CD4-positive, alpha-beta memory T cell (primary cell): ENCODE measurements at regions of chr6 and their contacts with region 1.

Region 1: GRCh38 chr6:130189531-130190397 is 33.0 kb downstream of the SAMD3 start:
- DNase-seq: no peak
- H3K4me3 ChIP-seq: no peak overlapping the region
- H3K4me3 Mint-ChIP-seq: peak overlapping the region in 3 of 8 donors; percentile 14 to 37 (median 16)
- H3K27ac ChIP-seq: no peak overlapping the region
- H3K27ac Mint-ChIP-seq: peak overlapping the region; percentile 41 to 88 (median 62)
- H3K4me1 ChIP-seq: peaks cover 38% of the 10 kb centered on the region
- H3K4me1 Mint-ChIP-seq: peaks cover 52 to 84% (median 67%) of the 10 kb centered on the region in 4 donors
- H3K27me3 ChIP-seq: no peaks in the 10 kb centered on the region
- H3K27me3 Mint-ChIP-seq: no peaks in the 10 kb centered on the region

Region 2: DNA sequence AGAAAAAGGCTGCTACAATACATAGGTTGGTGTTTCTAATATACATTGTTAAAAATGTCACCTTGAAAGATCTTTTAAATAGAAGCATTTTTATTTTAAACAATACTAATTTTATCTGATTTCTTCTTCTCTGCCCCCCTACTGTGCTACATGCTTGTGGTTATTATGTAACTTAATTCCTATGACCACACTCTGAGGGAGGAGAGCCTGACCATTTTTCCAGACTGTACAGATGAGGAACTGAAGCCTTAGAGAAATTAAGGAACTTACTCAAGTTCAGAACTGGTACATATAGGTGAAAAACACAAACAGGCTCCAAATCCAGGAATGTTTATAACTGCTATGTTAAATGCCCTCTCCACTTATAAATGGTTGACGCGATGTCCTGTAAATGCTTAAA is 436.3 kb before region 1 on chr6:
- CTCF ChIA-PET with region 1: no interaction called
- POLR2A ChIA-PET with region 1: no interaction called
- intact Hi-C with region 1: no loop called
- DNase-seq: no peak
- H3K4me3 ChIP-seq: no peak overlapping the region
- H3K4me3 Mint-ChIP-seq: no peak overlapping the region
- H3K27ac ChIP-seq: no peak overlapping the region
- H3K27ac Mint-ChIP-seq: no peak overlapping the region
- H3K4me1 ChIP-seq: peaks cover 37% of the 10 kb centered on the region
- H3K4me1 Mint-ChIP-seq: peaks cover 30 to 36% (median 34%) of the 10 kb centered on the region in 4 donors
- H3K27me3 ChIP-seq: no peaks in the 10 kb centered on the region
- H3K27me3 Mint-ChIP-seq: no peaks in the 10 kb centered on the region

Region 3: GRCh38 chr6:129936329-129937165 is 253.2 kb before region 1 on chr6:
- CTCF ChIA-PET with region 1: no interaction called
- POLR2A ChIA-PET with region 1: no interaction called
- intact Hi-C with region 1: no loop called
- DNase-seq: peak in 4 of 5 donors; percentile 25 to 39 (median 34)
- H3K4me3 ChIP-seq: no peak overlapping the region
- H3K4me3 Mint-ChIP-seq: peak overlapping the region in 2 of 8 donors; percentile 38 to 79
- H3K27ac ChIP-seq: no peak overlapping the region
- H3K27ac Mint-ChIP-seq: no peak overlapping the region
- H3K4me1 ChIP-seq: no peaks in the 10 kb centered on the region
- H3K4me1 Mint-ChIP-seq: peaks cover 0 to 4% (median 1%) of the 10 kb centered on the region in 4 donors
- H3K27me3 ChIP-seq: peaks cover 4% of the 10 kb centered on the region
- H3K27me3 Mint-ChIP-seq: peaks cover 11 to 15% of the 10 kb centered on the region in 2 donors

Region 4: DNA sequence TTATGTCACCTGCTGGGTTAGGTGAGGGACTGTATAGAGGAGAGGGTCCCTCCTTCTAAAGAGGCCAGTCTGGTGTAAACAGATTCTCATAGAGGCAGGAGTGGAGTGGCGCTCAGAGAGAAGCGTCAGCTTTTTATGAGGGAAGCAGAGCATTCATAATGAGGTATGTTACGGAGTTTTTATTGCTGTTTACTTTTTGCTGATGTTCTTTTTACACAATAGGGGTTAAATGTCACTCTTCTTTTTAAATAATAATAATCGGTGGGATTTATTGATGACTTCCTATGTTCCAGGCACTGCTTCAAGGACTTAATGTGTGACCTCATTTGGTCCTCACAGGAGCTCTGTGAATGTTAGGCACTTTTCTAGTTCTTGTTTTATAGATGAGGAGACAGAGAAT is 91.4 kb before region 1 on chr6:
- CTCF ChIA-PET with region 1: no interaction called
- POLR2A ChIA-PET with region 1: no interaction called
- intact Hi-C with region 1: no loop called
- DNase-seq: no peak
- H3K4me3 ChIP-seq: no peak overlapping the region
- H3K4me3 Mint-ChIP-seq: no peak overlapping the region
- H3K27ac ChIP-seq: no peak overlapping the region
- H3K27ac Mint-ChIP-seq: no peak overlapping the region
- H3K4me1 ChIP-seq: peaks cover 3% of the 10 kb centered on the region
- H3K4me1 Mint-ChIP-seq: peaks cover 0 to 25% (median 4%) of the 10 kb centered on the region in 4 donors
- H3K27me3 ChIP-seq: no peaks in the 10 kb centered on the region
- H3K27me3 Mint-ChIP-seq: no peaks in the 10 kb centered on the region

Region 5: GRCh38 chr6:130202782-130203181 is 13.0 kb after region 1 on chr6:
- CTCF ChIA-PET with region 1: interaction called, 18 read pairs
- POLR2A ChIA-PET with region 1: interaction called, 20 read pairs
- intact Hi-C with region 1: no loop called
- DNase-seq: peak in 1 of 5 donors; percentile 64
- H3K4me3 ChIP-seq: peak overlapping the region in 1 of 2 donors; percentile 5
- H3K4me3 Mint-ChIP-seq: peak overlapping the region in 7 of 8 donors; percentile 7 to 81 (median 47)
- H3K27ac ChIP-seq: no peak overlapping the region
- H3K27ac Mint-ChIP-seq: peak overlapping the region in 6 of 7 donors; percentile 10 to 82 (median 76)
- H3K4me1 ChIP-seq: peaks cover 44% of the 10 kb centered on the region
- H3K4me1 Mint-ChIP-seq: peaks cover 46 to 87% (median 70%) of the 10 kb centered on the region in 4 donors
- H3K27me3 ChIP-seq: no peaks in the 10 kb centered on the region
- H3K27me3 Mint-ChIP-seq: no peaks in the 10 kb centered on the region

Region 6: GRCh38 chr6:130223508-130223907 is 33.7 kb after region 1 on chr6:
- CTCF ChIA-PET with region 1: interaction called, 33 read pairs
- POLR2A ChIA-PET with region 1: interaction called, 29 read pairs
- intact Hi-C with region 1: no loop called
- DNase-seq: peak; percentile 60 to 78 (median 63)
- H3K4me3 ChIP-seq: no peak overlapping the region
- H3K4me3 Mint-ChIP-seq: peak overlapping the region; percentile 62 to 93 (median 89)
- H3K27ac ChIP-seq: peak overlapping the region; percentile 47
- H3K27ac Mint-ChIP-seq: peak overlapping the region; percentile 83 to 96 (median 92)
- H3K4me1 ChIP-seq: peaks cover 39% of the 10 kb centered on the region
- H3K4me1 Mint-ChIP-seq: peaks cover 27 to 52% (median 40%) of the 10 kb centered on the region in 4 donors
- H3K27me3 ChIP-seq: no peaks in the 10 kb centered on the region
- H3K27me3 Mint-ChIP-seq: no peaks in the 10 kb centered on the region